Pancreas (tissue), 10 donors: ENCODE measurements at regions of chr10 and their contacts with region 1.

Region 1: GRCh38 chr10:120423431-120424197 is 33.4 kb upstream of the PLPP4 start:
- DNase-seq: peak in 3 of 6 donors; percentile 24 to 63 (median 32)
- ATAC-seq: peak; percentile 48 to 85 (median 72)
- H3K4me3 ChIP-seq: no peak overlapping the region
- H3K27ac ChIP-seq: no peak overlapping the region
- H3K4me1 ChIP-seq: no peaks in the 10 kb centered on the region
- H3K27me3 ChIP-seq: no peaks in the 10 kb centered on the region
- CTCF ChIP-seq: peak; percentile 62 to 82 (median 72)

Region 2: DNA sequence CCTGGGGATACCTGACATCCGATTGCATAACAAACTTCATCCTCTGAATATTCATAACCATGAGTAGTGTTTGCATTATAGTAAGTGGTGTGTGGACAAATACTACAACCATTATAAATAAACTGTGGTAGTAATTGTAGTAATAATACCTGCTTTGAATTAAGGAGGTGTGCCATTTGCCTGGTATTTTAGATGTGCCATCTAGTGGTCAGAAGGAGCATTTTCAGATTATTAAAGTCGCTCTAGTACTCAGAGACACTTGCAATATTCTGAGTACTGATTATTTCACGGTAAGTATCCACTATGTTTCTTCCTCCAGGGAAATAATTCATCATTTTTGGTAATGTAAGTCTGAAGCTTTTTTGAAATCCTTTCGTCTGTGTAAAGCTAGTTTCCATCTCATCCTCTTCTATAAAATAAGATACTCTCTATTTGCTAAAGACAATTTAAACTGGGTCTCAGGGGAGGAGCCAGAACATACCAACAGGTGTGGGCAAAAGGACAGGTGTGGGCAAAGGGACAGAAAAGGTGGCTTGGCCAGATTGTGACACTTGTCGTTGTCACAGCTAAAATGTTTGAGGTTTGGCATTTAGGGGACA is 312.3 kb after region 1 on chr10:
- intact Hi-C with region 1: loop called in 2 of 3 experiments (anchors 5 to 10 kb)
- DNase-seq: no peak
- ATAC-seq: peak in 3 of 4 donors; percentile 63 to 74 (median 70)
- H3K4me3 ChIP-seq: no peak overlapping the region
- H3K27ac ChIP-seq: no peak overlapping the region
- H3K4me1 ChIP-seq: no peaks in the 10 kb centered on the region
- H3K27me3 ChIP-seq: no peaks in the 10 kb centered on the region
- CTCF ChIP-seq: peak; percentile 11 to 71 (median 60)